ENCODE measurements at regions of chr6 and their contacts with region 1.

Region 1: DNA sequence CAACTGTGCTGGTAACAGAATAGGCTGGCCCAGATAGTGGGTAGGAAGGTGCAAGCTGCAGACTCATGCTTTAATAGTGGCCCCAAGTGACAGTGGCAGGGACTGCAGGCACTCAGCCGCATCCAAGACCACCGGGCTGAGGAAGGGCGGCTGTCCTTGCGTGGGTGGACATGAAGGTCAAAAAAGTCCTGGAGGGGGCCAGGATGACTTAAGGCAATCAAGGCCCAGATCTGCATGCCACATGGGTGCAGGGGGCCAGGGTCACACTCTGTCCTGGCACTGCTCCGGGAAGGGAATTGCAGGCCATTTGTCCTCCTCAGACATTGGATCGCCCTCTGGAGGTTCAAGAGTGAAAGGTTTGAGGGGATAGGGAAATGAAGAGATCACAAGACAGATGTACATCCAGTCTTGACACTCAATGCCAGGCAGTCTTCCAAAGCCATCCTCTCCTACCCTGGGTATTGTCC is 10.4 kb upstream of the VNN2 start:
- DNase-seq: peak; percentile 74 to 83 (median 82)
- H3K4me3 ChIP-seq: peak overlapping the region; percentile 30 to 88 (median 60)
- H3K27ac ChIP-seq: no peak overlapping the region
- H3K4me1 ChIP-seq: peaks cover 0 to 14% (median 3%) of the 10 kb centered on the region in 4 experiments
- H3K27me3 ChIP-seq: no peaks in the 10 kb centered on the region

Region 2: DNA sequence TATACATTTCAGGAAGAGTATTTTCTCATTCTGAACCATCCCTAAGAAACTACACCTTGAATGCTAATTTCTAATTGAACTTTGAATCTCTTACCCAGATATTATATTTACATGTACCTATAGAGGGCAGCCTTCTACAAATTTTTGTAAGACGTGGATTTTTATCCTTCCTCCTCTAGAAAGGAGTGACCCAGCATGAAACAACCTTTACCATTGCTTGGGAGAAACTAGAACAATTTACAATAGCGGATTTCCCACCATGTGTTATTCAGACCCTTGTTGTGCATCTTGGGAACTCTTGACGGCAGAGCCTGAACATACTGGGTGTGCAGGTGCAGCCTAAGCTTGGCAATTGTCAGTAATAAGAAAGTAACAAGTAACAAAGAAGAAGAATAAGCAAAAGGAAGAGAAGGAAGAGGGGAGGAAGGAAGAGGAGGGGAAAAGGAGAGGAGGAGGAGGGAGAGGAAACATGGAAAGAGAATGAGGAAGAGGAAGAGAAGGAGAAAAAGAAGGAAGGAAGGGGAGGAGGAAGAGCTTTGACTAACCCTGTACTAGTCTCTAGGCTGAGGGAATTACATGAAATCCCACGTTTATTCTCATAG is 98.3 kb before region 1 on chr6:
- CTCF ChIA-PET with region 1: interaction called, 196 read pairs
- POLR2A ChIA-PET with region 1: no interaction called
- DNase-seq: peak; percentile 50 to 71 (median 68)
- H3K4me3 ChIP-seq: peak overlapping the region in 3 of 7 experiments; percentile 33 to 54 (median 42)
- H3K27ac ChIP-seq: no peak overlapping the region
- H3K4me1 ChIP-seq: peaks cover 0 to 4% (median 3%) of the 10 kb centered on the region in 4 experiments
- H3K27me3 ChIP-seq: no peaks in the 10 kb centered on the region

Region 3: GRCh38 chr6:132734694-132735635 is 33.1 kb before region 1 on chr6:
- CTCF ChIA-PET with region 1: interaction called, 15 read pairs
- POLR2A ChIA-PET with region 1: no interaction called
- DNase-seq: peak in 2 of 3 donors; percentile 38 to 45
- H3K4me3 ChIP-seq: peak overlapping the region in 1 of 7 experiments; percentile 58
- H3K27ac ChIP-seq: no peak overlapping the region
- H3K4me1 ChIP-seq: peaks cover 0 to 16% (median 3%) of the 10 kb centered on the region in 4 experiments
- H3K27me3 ChIP-seq: no peaks in the 10 kb centered on the region

Region 4: DNA sequence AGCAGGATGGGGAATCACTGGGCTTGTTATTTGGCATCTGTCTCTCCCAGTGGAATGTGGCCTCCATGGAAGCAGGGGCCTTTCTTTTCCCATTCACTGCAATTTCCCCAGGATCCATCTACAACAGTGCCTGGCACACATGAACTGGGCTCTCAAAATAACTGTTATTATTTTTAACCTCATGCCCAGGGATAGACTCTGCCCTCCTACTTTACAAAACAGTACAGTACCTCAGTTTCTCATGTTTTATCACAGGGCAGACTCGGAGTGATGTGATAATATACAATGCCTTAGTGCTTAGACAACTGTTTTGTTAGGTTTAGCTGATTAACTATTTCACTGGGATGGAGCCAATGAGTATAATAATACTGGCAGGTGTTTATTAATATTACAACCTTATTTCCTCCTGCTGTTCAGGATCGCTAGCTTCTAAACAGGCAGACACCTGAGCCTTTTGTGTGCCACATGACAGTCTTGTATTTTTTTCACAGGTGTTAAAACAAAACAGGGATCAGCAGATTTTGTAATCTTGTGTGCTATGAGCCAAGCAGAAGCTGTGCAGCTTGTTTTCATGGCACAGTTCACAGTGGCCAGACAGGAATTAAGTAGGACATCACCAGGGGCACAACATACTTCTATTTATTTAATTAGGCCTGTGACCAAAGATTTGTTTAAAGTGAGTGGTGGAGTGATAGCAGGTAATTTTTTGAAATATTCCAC is 315.3 kb after region 1 on chr6:
- CTCF ChIA-PET with region 1: no interaction called
- POLR2A ChIA-PET with region 1: no interaction called
- DNase-seq: no peak
- H3K4me3 ChIP-seq: no peak overlapping the region
- H3K27ac ChIP-seq: no peak overlapping the region
- H3K4me1 ChIP-seq: no peaks in the 10 kb centered on the region
- H3K27me3 ChIP-seq: no peaks in the 10 kb centered on the region

Measured in common myeloid progenitor, CD34-positive (primary cell).